Right lobe of liver (tissue), 6 donors: ENCODE measurements at regions of chr7 and their contacts with region 1.

Region 1: GRCh38 chr7:47982610-47983009 is 3.2 kb upstream of the HUS1 start:
- DNase-seq: no peak
- ATAC-seq: no peak
- H3K4me3 ChIP-seq: no peak overlapping the region
- H3K27ac ChIP-seq: no peak overlapping the region
- H3K4me1 ChIP-seq: peaks cover 0 to 13% (median 3%) of the 10 kb centered on the region in 4 donors
- H3K27me3 ChIP-seq: no peaks in the 10 kb centered on the region
- CTCF ChIP-seq: no peak
- POLR2A ChIP-seq: no peak

Region 2: DNA sequence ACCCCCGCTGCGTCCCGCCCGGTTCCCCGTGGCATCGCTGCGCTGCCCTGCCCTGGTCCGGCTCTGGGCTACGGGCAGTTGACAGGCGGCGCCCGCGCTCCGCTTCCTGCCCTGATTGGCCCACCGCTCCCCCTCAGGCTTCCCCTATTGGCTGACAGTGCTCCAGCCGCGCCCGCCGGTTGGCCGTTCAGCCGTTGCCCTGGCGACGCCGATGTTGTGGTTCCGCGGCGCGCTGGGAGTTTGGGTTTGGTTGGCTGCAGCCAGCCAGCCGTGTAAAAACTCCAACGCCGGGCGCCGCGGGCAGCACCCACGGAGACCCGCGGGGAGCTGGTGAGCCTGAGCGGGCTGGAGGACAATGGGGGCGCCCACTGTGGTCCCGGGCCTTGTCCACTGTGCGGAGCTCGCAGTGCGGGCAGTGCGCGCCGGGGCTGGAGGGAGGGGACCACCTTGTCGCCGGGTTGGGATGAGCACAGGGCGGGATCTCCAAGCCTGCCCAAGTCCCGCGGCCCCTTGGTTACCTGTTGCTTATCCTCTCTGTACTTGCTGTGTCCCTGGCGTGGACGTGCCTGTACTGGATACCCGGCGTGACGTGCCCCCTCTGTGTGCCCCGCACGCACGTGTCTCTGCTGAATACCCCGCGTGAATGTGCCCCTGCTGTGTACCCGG is 52.8 kb after region 1 on chr7 and contains the start of gene C7orf57:
- intact Hi-C with region 1: loop called in 1 of 2 experiments (anchors 5 kb)
- DNase-seq: peak; percentile 83 to 93 (median 89)
- ATAC-seq: peak; percentile 99 to 100 (median 99)
- H3K4me3 ChIP-seq: peak within 1 kb of the TSS; percentile 41 to 53 (median 42)
- H3K27ac ChIP-seq: no peak within 1 kb of the TSS
- H3K4me1 ChIP-seq: peaks cover 0 to 7% (median 0%) of the 10 kb centered on the region in 4 donors
- H3K27me3 ChIP-seq: no peaks in the 10 kb centered on the region
- CTCF ChIP-seq: peak in 2 of 4 donors; percentile 24 to 48
- POLR2A ChIP-seq: no peak
- total RNA-seq, gene C7orf57: not detected